ENCODE measurements at regions of chr20 and their contacts with region 1.

Region 1: GRCh38 chr20:24891546-24892393 is 57.3 kb upstream of the CST7 start:
- DNase-seq: no peak
- ATAC-seq: no peak
- H3K4me3 ChIP-seq: no peak overlapping the region
- H3K27ac ChIP-seq: no peak overlapping the region
- H3K4me1 ChIP-seq: no peaks in the 10 kb centered on the region
- H3K27me3 ChIP-seq: no peaks in the 10 kb centered on the region

Region 2: DNA sequence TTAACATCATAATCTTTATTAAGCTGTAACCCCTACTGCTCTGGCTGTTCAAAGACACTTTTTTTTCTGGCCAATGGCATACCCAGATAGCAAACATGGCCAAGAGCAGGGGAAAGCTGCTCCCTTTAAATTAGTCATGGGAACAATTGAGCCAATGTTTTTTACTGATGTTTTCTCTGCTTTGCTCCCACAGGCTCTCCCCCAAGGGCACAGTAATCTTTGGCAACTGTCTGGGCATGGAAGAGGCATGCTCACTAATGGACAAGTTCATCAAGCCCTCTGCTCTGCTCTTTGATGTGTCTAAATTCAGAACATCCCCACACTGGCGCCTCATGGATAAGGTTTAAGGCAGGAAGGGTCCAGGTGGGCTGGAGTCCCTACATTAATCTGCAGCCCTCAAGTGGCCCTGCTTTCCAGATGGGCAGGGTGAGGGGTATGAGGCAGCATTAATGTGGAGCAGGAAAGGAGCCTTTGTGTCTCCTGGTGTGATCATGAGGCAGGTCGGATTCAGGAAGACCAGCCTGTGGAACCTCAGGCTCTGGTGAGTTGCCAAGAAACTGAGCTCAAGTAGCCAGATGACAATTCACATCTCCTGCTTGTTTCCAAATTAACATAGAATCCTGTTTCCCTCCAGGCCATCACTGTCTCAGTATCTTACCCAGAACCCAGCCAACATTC is 169.7 kb before region 1 on chr20:
- intact Hi-C with region 1: no loop called
- DNase-seq: no peak
- ATAC-seq: no peak
- H3K4me3 ChIP-seq: no peak overlapping the region
- H3K27ac ChIP-seq: no peak overlapping the region
- H3K4me1 ChIP-seq: peaks cover 2% of the 10 kb centered on the region
- H3K27me3 ChIP-seq: no peaks in the 10 kb centered on the region

Region 3: DNA sequence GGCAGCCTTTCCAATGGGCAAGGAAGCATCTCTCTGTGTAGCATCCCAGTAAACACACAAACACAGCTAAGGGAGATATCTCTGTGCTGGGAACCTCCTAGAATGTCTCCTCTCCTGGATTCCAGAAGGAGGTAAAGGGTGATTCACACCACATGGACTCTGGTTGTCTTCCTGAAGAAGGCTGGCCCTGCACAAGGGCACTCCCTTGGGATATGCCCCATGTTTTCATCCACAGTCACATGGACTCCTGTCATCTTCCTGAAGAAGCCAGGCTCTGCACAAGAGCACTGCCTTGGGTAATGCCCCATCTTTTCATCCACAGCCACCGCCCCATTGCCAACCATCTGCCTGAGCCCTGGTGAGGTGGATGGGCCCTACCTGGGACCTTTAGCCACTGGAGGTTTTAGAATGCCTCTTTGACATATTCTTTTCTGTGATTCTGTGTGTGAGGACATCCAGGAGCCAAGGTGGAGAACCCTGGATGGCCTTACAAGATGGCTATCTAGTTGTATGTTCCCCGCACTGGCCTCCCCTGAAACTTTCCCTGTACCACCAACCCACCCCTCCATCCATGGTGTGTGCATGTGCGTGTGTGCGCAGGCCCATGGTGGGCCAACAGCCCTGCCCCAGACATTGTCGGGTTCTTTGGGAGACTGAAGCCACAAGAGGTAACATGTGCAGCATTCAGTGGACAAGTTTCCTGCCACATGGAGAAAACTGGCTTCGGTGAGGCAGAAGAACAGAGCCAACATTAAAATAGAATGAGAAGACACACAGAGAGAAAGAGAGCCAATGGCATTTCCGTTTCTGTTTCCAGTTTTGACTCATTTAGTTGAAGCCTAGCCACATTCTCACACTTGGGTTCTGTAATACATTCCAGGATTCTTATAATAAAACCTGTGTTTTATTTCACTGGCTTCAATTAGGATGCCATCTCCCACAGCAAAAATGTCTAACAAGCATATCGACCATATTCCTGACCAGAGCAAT is 52.9 kb before region 1 on chr20:
- intact Hi-C with region 1: loop called in 1 of 4 experiments (anchors 10 kb)
- DNase-seq: no peak
- ATAC-seq: no peak
- H3K4me3 ChIP-seq: no peak overlapping the region
- H3K27ac ChIP-seq: no peak overlapping the region
- H3K4me1 ChIP-seq: no peaks in the 10 kb centered on the region
- H3K27me3 ChIP-seq: no peaks in the 10 kb centered on the region

Region 4: GRCh38 chr20:25685276-25686080 is 793.7 kb after region 1 on chr20:
- intact Hi-C with region 1: no loop called
- DNase-seq: peak in 2 of 3 donors; percentile 23 to 30
- ATAC-seq: peak; percentile 29 to 33
- H3K4me3 ChIP-seq: no peak overlapping the region
- H3K27ac ChIP-seq: no peak overlapping the region
- H3K4me1 ChIP-seq: no peaks in the 10 kb centered on the region
- H3K27me3 ChIP-seq: no peaks in the 10 kb centered on the region